Posterior vena cava (tissue), 2 donors: ENCODE measurements at regions of chr4 and their contacts with region 1.

Region 1: DNA sequence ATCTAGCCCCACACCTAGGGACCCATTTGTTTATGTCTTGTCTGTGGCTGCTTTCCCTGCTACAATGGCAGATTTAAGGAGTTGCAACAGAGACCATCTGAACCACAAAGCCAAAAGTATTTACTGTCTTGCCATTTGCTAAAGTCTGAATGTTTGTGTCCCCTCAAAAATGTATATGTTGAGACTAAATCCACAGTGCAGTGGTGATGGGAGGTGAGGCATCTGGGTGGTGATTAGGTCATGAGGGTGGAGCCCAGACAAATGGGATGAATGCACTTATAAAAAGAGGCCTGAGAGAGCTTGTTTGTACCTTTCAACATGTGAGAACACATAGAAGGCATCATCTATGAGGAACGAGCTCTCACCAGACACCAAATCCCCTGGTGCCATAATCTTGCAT is 137.3 kb downstream of the TMEM144 start:
- DNase-seq: no peak

Region 2: GRCh38 chr4:158327525-158327924 is 20.0 kb before region 1 on chr4:
- intact Hi-C with region 1: loop called in 1 of 2 experiments (anchors 1 kb)
- DNase-seq: no peak

Region 3: GRCh38 chr4:158374318-158374717 is 26.8 kb after region 1 on chr4:
- intact Hi-C with region 1: loop called in 1 of 2 experiments (anchors 2 kb)
- DNase-seq: no peak